ENCODE measurements at regions of chr4 and their contacts with region 1.

Region 1: GRCh38 chr4:15956179-15956850 is 6.7 kb downstream of the FGFBP2 start:
- DNase-seq: peak; percentile 56
- ATAC-seq: peak; percentile 100
- H3K4me3 Mint-ChIP-seq: no peak overlapping the region
- H3K27ac Mint-ChIP-seq: no peak overlapping the region
- H3K4me1 Mint-ChIP-seq: peaks cover 5% of the 10 kb centered on the region
- H3K27me3 Mint-ChIP-seq: no peaks in the 10 kb centered on the region
- CTCF ChIP-seq: no peak

Region 2: GRCh38 chr4:15231265-15232091 is 724.8 kb before region 1 on chr4:
- CTCF ChIA-PET with region 1: no interaction called
- POLR2A ChIA-PET with region 1: no interaction called
- intact Hi-C with region 1: loop called (anchors 1 kb)
- DNase-seq: peak; percentile 24
- ATAC-seq: peak; percentile 79
- H3K4me3 Mint-ChIP-seq: no peak overlapping the region
- H3K27ac Mint-ChIP-seq: no peak overlapping the region
- H3K4me1 Mint-ChIP-seq: peaks cover 21% of the 10 kb centered on the region
- H3K27me3 Mint-ChIP-seq: peaks cover 2% of the 10 kb centered on the region
- CTCF ChIP-seq: peak; percentile 70

Region 3: DNA sequence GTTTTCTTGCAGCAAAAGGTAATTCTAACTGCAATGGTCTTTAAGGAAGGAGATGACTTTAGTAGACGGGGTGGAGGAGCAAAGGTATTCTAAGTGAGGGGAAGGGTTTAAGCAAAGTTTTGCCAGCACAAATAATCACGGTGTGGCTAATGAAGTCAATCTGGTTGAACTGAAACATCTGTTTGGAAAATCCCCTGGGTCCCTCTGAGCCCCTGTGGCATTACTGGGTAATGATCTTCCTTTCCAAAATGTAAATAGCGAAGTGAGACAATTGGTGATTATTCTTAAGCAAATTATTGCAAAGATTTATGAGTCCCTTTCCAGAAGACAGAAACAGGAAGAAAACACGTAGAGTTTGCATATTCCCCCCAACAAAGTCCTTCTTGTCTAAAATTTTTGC is 65.0 kb before region 1 on chr4:
- CTCF ChIA-PET with region 1: interaction called, 4 read pairs
- POLR2A ChIA-PET with region 1: no interaction called
- intact Hi-C with region 1: loop called (anchors 2 kb)
- DNase-seq: no peak
- ATAC-seq: peak; percentile 66
- H3K4me3 Mint-ChIP-seq: no peak overlapping the region
- H3K27ac Mint-ChIP-seq: no peak overlapping the region
- H3K4me1 Mint-ChIP-seq: peaks cover 23% of the 10 kb centered on the region
- H3K27me3 Mint-ChIP-seq: peaks cover 7% of the 10 kb centered on the region
- CTCF ChIP-seq: no peak

Region 4: GRCh38 chr4:15976456-15977447 is 20.4 kb after region 1 on chr4:
- CTCF ChIA-PET with region 1: no interaction called
- POLR2A ChIA-PET with region 1: no interaction called
- intact Hi-C with region 1: no loop called
- DNase-seq: no peak
- ATAC-seq: no peak
- H3K4me3 Mint-ChIP-seq: no peak overlapping the region
- H3K27ac Mint-ChIP-seq: no peak overlapping the region
- H3K4me1 Mint-ChIP-seq: no peaks in the 10 kb centered on the region
- H3K27me3 Mint-ChIP-seq: no peaks in the 10 kb centered on the region
- CTCF ChIP-seq: no peak

Measured in activated B cell treated with CpG ODN at 0.5 μM for 24 hours (primary cell).